AG04449 (cell line): ENCODE measurements at regions of chr6 and their contacts with region 1.

Region 1: GRCh38 chr6:5401845-5402738 is 140.8 kb downstream of the FARS2 start:
- DNase-seq: no peak
- H3K4me3 ChIP-seq: no peak overlapping the region
- CTCF ChIP-seq: no peak

Region 2: GRCh38 chr6:5214570-5215052 is 187.5 kb before region 1 on chr6:
- CTCF ChIA-PET with region 1: interaction called, 14 read pairs
- POLR2A ChIA-PET with region 1: no interaction called
- DNase-seq: no peak
- H3K4me3 ChIP-seq: no peak overlapping the region
- CTCF ChIP-seq: peak; percentile 93

Region 3: DNA sequence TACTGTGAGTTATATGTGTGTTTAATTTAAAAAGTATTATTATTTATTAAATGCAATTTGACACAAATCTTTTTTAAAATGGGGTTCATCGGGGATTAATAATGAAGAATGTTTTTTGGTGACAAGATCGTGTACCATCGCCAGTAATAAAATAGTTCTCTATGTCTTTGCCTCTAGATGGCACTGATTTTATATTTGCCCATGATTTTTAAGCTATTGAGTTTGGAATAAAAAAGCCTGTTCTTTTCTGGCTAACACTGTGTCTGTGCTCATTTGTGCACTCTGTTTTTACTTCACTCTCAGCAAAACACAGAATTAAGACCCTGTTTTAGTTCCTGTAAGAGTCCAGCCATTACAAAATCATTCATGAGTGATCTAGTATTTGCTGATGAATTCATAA is 13.8 kb before region 1 on chr6:
- CTCF ChIA-PET with region 1: interaction called, 11 read pairs
- POLR2A ChIA-PET with region 1: no interaction called
- DNase-seq: no peak
- H3K4me3 ChIP-seq: no peak overlapping the region
- CTCF ChIP-seq: no peak